ENCODE measurements at regions of chr9 and their contacts with region 1.

Region 1: GRCh38 chr9:116166710-116167385 is 13.3 kb downstream of the PAPPA start:
- DNase-seq: no peak
- H3K27ac ChIP-seq: no peak overlapping the region
- CTCF ChIP-seq: peak; percentile 45; the same call in 1 of the 2 replicates

Region 2: GRCh38 chr9:115939065-115939765 is 227.6 kb before region 1 on chr9:
- CTCF ChIA-PET with region 1: no interaction called
- POLR2A ChIA-PET with region 1: no interaction called
- DNase-seq: peak; percentile 83
- H3K27ac ChIP-seq: no peak overlapping the region
- CTCF ChIP-seq: no peak

Region 3: GRCh38 chr9:116493183-116493860 is 326.5 kb after region 1 on chr9:
- CTCF ChIA-PET with region 1: interaction called, 10 read pairs
- POLR2A ChIA-PET with region 1: no interaction called
- DNase-seq: no peak
- H3K27ac ChIP-seq: no peak overlapping the region
- CTCF ChIP-seq: no peak

Measured in RWPE1 (cell line).